Posterior cingulate gyrus (tissue), 11 donors: ENCODE measurements at regions of chr1 and their contacts with region 1.

Region 1: DNA sequence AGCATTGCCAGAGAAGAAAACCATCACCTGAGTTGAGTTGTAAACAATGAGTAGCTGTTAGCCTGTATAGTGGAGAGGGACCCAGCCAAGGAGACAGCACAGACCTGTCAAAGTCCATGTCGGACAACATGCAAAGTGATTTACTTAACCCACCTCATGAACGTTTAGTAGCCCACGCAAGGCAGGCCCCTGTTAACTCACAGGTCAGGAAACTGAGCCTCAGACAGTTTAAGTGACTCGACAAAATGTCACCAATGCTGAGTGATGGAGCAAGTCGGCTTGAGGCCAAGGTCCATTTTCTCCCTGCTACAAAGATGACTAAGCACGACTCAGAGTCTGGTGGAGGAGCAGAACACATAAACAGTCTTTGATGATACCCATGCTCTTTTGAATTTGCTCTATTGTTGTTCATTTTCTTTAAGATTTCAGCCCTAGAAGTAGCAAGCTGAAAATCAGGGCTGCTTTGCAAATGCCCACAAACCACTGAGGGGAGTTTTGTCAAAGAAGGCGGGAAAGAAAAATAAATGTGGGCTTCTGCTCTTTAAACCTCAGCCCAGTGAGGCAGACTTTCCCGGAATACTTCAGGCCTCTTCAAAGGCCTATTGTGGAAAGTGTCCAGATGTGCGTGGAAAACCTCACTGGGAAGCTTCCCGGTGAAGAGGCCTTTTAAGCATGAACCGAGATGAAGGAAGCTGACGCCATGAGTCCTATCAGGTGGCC is 83.8 kb upstream of the HOOK1 start:
- DNase-seq: peak in 5 of 10 donors; percentile 32 to 84 (median 53)

Region 2: DNA sequence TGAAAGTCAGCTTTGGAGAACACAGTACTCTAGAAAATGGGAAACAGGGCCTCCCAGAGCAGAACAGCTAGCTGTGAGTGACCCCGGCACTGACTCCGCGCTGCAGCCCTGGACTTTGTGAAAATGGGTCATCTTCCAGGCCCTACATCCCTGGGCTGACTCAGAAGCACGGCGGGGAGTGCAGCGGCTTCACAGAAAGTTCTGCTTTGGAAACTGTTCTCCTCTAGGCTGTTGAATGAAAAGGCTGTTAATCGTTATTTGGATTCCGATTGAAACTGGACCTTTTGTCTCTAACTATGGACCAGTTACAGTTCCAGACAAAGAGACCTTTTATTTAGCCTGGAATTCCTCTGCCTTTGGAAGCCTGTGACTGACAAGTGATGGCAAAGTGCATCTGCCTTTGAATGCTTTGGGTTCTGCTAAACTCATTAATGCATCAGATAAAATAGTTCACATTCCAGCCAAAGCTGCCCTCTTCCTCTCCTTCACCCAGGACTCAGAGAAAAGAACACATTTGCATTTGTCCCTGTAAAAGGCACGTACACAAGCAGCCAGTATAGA is 61.1 kb before region 1 on chr1:
- intact Hi-C with region 1: loop called (anchors 10 kb)
- DNase-seq: peak; percentile 22 to 93 (median 54)

Region 3: DNA sequence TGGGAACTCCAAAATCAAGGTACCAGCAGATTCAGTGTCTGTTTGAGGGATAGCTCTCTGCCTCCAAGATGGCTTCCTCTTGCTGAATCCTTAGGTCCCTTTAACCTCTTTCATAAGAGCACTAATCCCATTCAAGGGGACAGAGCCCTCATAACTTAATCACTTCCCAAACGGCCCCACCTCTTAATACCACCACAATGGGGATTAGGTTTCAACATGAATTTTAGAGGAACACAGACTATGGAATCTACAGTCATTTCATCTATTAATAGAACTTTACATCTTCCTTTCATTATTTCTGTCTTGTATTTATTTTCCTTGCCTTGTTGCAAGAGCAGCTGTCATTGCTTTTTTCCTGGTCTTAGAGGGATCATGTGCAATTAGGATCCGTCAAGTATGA is 114.2 kb after region 1 on chr1:
- intact Hi-C with region 1: no loop called
- DNase-seq: no peak